CD4-positive, alpha-beta T cell (primary cell): ENCODE measurements at regions of chr16 and their contacts with region 1.

Region 1: DNA sequence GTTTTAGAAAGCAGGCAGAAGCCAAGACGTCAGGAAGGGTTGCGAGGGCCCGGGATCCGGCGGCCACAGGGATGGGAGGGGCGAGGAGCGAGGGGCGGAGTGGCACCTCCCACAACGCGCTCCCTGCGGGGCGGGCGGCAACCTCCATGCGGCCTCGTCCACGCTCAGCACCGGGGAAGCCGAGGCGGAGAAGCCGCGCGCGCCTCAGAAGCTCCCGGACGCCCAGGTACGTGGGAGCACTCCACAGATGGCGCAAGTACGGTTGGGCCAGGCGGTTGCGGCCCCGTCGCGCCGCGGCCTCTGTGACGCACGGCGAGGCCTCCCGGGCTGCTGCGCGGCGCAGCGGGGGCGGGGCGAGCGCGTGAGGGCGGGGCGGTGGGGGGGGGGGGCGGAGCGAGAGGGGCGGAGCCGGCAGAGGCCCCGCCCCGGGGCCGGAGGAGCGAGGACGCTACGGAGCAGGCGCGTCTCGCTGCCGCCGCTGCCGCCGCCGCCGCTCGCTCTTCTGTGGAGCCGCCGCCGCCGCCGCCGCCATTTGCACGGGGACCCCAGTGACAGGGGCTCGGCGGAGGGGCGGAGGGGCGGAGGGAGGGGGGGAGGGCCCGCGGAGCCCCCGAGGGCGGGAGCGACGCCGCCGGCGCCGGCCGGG is at the start of gene TENT4B:
- DNase-seq: peak; percentile 84 to 96 (median 90)
- ATAC-seq: peak; percentile 80
- H3K4me3 ChIP-seq: peak within 1 kb of the TSS; percentile 77
- H3K4me3 Mint-ChIP-seq: peak within 1 kb of the TSS; percentile 94
- H3K27ac ChIP-seq: peak within 1 kb of the TSS; percentile 84 to 90
- H3K27ac Mint-ChIP-seq: peak within 1 kb of the TSS; percentile 92
- H3K4me1 ChIP-seq: peaks cover 47% of the 10 kb centered on the region
- H3K4me1 Mint-ChIP-seq: peaks cover 38% of the 10 kb centered on the region
- H3K27me3 ChIP-seq: no peaks in the 10 kb centered on the region
- H3K27me3 Mint-ChIP-seq: no peaks in the 10 kb centered on the region
- CTCF ChIP-seq: no peak
- total RNA-seq, gene TENT4B: 32.9 to 35.0 TPM

Region 2: GRCh38 chr16:50065624-50066481 is 87.1 kb before region 1 on chr16 and contains the start of gene HEATR3:
- CTCF ChIA-PET with region 1: no interaction called
- POLR2A ChIA-PET with region 1: interaction called, 17 read pairs
- intact Hi-C with region 1: loop called (anchors 2 kb)
- DNase-seq: peak; percentile 89 to 98 (median 95)
- ATAC-seq: peak; percentile 83
- H3K4me3 ChIP-seq: peak within 1 kb of the TSS; percentile 69
- H3K4me3 Mint-ChIP-seq: peak within 1 kb of the TSS; percentile 99
- H3K27ac ChIP-seq: peak within 1 kb of the TSS; percentile 69 to 85
- H3K27ac Mint-ChIP-seq: peak within 1 kb of the TSS; percentile 83
- H3K4me1 ChIP-seq: peaks cover 25% of the 10 kb centered on the region
- H3K4me1 Mint-ChIP-seq: peaks cover 53% of the 10 kb centered on the region
- H3K27me3 ChIP-seq: no peaks in the 10 kb centered on the region
- H3K27me3 Mint-ChIP-seq: no peaks in the 10 kb centered on the region
- CTCF ChIP-seq: no peak
- total RNA-seq, gene HEATR3: 10.1 to 10.6 TPM

Region 3: DNA sequence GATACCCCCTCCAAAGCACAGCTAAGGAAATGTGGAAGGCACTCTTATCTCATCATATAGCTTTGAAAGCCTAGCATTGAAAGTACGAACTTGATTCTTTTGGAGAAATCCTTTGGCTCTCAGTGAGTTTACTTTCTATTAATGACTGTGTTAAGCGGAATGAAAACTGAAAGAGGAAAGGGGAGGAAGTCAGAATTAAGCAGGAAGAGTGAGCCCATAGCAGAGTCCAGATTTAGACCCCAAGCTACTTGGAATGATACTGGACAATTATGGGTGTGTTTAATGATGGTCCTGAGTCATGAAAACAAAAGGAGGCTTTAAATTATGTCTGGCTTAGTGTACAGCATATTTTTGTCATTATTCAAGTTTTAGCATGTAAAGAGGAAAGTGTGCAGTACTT is 42.3 kb after region 1 on chr16:
- CTCF ChIA-PET with region 1: no interaction called
- POLR2A ChIA-PET with region 1: interaction called, 10 read pairs
- intact Hi-C with region 1: no loop called
- DNase-seq: peak in 1 of 14 experiments; percentile 27
- ATAC-seq: no peak
- H3K4me3 ChIP-seq: no peak overlapping the region
- H3K4me3 Mint-ChIP-seq: no peak overlapping the region
- H3K27ac ChIP-seq: no peak overlapping the region
- H3K27ac Mint-ChIP-seq: peak overlapping the region; percentile 63
- H3K4me1 ChIP-seq: peaks cover 18% of the 10 kb centered on the region
- H3K4me1 Mint-ChIP-seq: peaks cover 66% of the 10 kb centered on the region
- H3K27me3 ChIP-seq: no peaks in the 10 kb centered on the region
- H3K27me3 Mint-ChIP-seq: no peaks in the 10 kb centered on the region
- CTCF ChIP-seq: no peak

Region 4: DNA sequence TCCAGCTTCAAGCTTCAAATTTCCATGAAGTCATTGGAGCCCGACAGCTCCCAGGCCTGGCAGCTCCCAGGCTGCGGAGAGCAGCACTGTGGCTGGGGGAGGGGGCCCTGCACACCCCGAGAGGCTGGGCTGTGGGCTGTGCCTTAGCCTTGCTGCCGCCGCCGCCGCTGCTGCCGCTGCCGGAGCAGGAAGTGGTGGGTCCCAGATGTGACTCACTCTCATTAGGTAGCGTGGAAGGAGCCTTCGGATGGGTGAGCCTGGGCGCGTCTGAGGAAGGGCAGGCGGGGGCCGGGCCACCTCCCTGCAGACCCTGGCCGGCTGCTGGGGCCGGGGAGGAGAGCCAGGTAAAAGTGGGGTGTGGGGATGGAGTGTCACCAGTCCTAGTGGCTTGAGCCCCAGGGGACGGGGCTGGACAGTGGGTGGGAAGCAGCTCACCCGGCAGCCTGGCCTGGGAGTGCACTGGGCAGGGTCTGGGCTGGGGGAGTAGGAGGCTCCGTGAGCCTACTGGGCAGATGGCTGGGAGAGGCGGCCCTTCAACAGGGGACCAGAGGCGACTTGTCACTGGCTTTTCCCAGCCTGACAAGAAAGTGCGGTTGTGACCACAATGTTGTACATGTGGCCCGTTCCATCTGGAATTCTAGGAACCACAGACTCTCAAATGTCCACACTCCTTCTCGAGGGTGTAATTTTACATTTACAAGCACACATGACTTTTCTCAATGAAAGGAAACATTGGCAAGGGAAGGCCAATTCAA is 113.6 kb after region 1 on chr16 and contains the start of gene ADCY7:
- CTCF ChIA-PET with region 1: no interaction called
- POLR2A ChIA-PET with region 1: no interaction called
- intact Hi-C with region 1: loop called (anchors 5 to 10 kb)
- DNase-seq: peak; percentile 66 to 90 (median 86)
- ATAC-seq: peak; percentile 91
- H3K4me3 ChIP-seq: peak within 1 kb of the TSS; percentile 98
- H3K4me3 Mint-ChIP-seq: peak within 1 kb of the TSS; percentile 99
- H3K27ac ChIP-seq: peak within 1 kb of the TSS; percentile 87 to 97
- H3K27ac Mint-ChIP-seq: peak within 1 kb of the TSS; percentile 100
- H3K4me1 ChIP-seq: peaks cover 65% of the 10 kb centered on the region
- H3K4me1 Mint-ChIP-seq: peaks cover 73% of the 10 kb centered on the region
- H3K27me3 ChIP-seq: no peaks in the 10 kb centered on the region
- H3K27me3 Mint-ChIP-seq: no peaks in the 10 kb centered on the region
- CTCF ChIP-seq: no peak
- total RNA-seq, gene ADCY7: 136 to 147 TPM

Region 5: GRCh38 chr16:50368410-50369132 is 215.6 kb after region 1 on chr16 and contains the start of gene BRD7:
- CTCF ChIA-PET with region 1: no interaction called
- POLR2A ChIA-PET with region 1: no interaction called
- intact Hi-C with region 1: loop called in 1 of 2 experiments (anchors 2 kb)
- DNase-seq: peak; percentile 30 to 88 (median 70)
- ATAC-seq: peak; percentile 83
- H3K4me3 ChIP-seq: peak within 1 kb of the TSS; percentile 62
- H3K4me3 Mint-ChIP-seq: peak within 1 kb of the TSS; percentile 94
- H3K27ac ChIP-seq: peak within 1 kb of the TSS; percentile 15 to 52
- H3K27ac Mint-ChIP-seq: peak within 1 kb of the TSS; percentile 91
- H3K4me1 ChIP-seq: peaks cover 28% of the 10 kb centered on the region
- H3K4me1 Mint-ChIP-seq: peaks cover 58% of the 10 kb centered on the region
- H3K27me3 ChIP-seq: no peaks in the 10 kb centered on the region
- H3K27me3 Mint-ChIP-seq: no peaks in the 10 kb centered on the region
- CTCF ChIP-seq: no peak
- total RNA-seq, gene BRD7: 95.4 to 103 TPM